ENCODE measurements at regions of chr2 and their contacts with region 1.

Region 1: DNA sequence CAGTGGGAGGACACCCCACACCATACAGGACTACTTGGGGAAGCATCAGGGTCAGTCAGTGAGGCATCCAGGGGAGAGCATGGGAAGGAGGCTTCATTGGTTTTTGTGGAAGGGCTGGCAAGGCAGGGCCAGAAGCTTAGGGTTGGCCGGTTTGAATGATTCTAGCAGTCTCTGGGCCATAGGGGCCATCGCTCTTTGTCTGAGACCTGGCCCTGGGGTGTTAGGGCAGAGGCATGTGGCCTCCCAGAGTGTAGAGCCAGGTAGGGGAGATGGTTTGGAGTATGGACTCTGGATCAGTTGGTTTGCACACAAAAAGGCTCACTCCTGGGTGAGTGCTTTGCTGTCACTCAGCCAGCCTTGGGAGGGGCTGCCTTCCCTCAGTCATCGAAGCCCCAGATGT is 98.5 kb downstream of the GLI2 start:
- DNase-seq: no peak
- ATAC-seq: no peak
- H3K4me3 ChIP-seq: no peak overlapping the region
- H3K27ac ChIP-seq: no peak overlapping the region
- H3K4me1 ChIP-seq: no peaks in the 10 kb centered on the region
- H3K27me3 ChIP-seq: no peaks in the 10 kb centered on the region
- CTCF ChIP-seq: no peak
- EP300 ChIP-seq: no peak
- POLR2A ChIP-seq: no peak
- RAD21 ChIP-seq: no peak

Region 2: DNA sequence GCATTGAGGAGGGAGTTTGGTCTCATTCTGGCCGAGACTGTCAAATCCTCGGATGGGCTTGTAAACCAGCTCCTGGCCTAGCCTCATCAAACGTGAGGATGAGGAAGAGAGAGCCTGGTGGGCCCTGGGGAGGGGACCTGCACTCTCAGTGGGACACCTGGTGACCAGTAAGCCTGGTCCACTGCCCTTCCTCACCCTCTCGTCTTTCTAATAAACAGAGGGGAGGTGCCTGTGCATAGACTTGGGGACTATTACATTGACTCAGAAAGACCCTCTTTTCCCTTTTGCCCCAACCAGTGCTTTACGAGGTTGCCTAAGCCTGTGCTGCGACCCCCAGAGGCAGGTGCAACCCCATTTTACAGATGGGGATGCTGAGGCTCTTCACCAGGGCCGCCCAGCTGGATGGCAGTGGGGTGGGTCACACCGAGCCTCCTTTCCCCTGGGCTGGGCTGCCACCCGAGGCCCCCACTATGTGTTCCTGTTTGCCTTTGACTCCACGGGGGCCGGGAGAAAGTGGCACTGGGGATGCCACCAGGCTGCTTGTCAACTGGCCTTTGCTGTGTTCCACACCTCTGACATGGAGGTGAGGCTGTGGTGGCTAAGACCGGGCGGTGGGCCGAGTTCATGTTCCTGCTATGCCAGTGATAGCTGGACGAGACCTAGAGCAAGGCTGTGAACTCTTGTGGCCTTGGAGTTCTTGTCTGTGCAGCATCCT is 12.6 kb before region 1 on chr2:
- CTCF ChIA-PET with region 1: no interaction called
- POLR2A ChIA-PET with region 1: no interaction called
- RAD21 ChIA-PET with region 1: no interaction called
- SMC1A ChIA-PET with region 1: no interaction called
- in situ Hi-C with region 1: no loop called
- intact Hi-C with region 1: loop called (anchors 1 kb)
- DNase-seq: no peak
- ATAC-seq: no peak
- H3K4me3 ChIP-seq: no peak overlapping the region
- H3K27ac ChIP-seq: no peak overlapping the region
- H3K4me1 ChIP-seq: no peaks in the 10 kb centered on the region
- H3K27me3 ChIP-seq: peaks cover 2% of the 10 kb centered on the region in 2 experiments; a peak in 2 of 4 replicates
- CTCF ChIP-seq: no peak
- EP300 ChIP-seq: no peak
- POLR2A ChIP-seq: no peak
- RAD21 ChIP-seq: no peak

Region 3: GRCh38 chr2:120892967-120893667 is 58.9 kb after region 1 on chr2:
- CTCF ChIA-PET with region 1: no interaction called
- POLR2A ChIA-PET with region 1: no interaction called
- RAD21 ChIA-PET with region 1: no interaction called
- SMC1A ChIA-PET with region 1: no interaction called
- in situ Hi-C with region 1: no loop called
- intact Hi-C with region 1: no loop called
- DNase-seq: no peak
- ATAC-seq: no peak
- H3K4me3 ChIP-seq: no peak overlapping the region
- H3K27ac ChIP-seq: no peak overlapping the region
- H3K4me1 ChIP-seq: no peaks in the 10 kb centered on the region
- H3K27me3 ChIP-seq: peaks cover 1 to 3% of the 10 kb centered on the region in 2 experiments; a peak in 2 of 4 replicates
- CTCF ChIP-seq: no peak
- EP300 ChIP-seq: no peak
- POLR2A ChIP-seq: no peak
- RAD21 ChIP-seq: no peak